MCF 10A (cell line): ENCODE measurements at regions of chr15 and their contacts with region 1.

Region 1: GRCh38 chr15:32651229-32651837 is 9.8 kb downstream of the SCG5 start:
- DNase-seq: peak; percentile 70
- H3K4me3 Mint-ChIP-seq: no peak overlapping the region
- H3K27ac Mint-ChIP-seq: no peak overlapping the region
- H3K4me1 Mint-ChIP-seq: peaks cover 12% of the 10 kb centered on the region
- H3K27me3 Mint-ChIP-seq: no peaks in the 10 kb centered on the region
- CTCF ChIP-seq: peak; percentile 88

Region 2: GRCh38 chr15:32956006-32956405 is 304.7 kb after region 1 on chr15:
- CTCF ChIA-PET with region 1: interaction called, 11 read pairs
- POLR2A ChIA-PET with region 1: no interaction called
- intact Hi-C with region 1: no loop called
- DNase-seq: peak; percentile 60
- H3K4me3 Mint-ChIP-seq: no peak overlapping the region
- H3K27ac Mint-ChIP-seq: no peak overlapping the region
- H3K4me1 Mint-ChIP-seq: peaks cover 8% of the 10 kb centered on the region
- H3K27me3 Mint-ChIP-seq: no peaks in the 10 kb centered on the region
- CTCF ChIP-seq: peak; percentile 38

Region 3: DNA sequence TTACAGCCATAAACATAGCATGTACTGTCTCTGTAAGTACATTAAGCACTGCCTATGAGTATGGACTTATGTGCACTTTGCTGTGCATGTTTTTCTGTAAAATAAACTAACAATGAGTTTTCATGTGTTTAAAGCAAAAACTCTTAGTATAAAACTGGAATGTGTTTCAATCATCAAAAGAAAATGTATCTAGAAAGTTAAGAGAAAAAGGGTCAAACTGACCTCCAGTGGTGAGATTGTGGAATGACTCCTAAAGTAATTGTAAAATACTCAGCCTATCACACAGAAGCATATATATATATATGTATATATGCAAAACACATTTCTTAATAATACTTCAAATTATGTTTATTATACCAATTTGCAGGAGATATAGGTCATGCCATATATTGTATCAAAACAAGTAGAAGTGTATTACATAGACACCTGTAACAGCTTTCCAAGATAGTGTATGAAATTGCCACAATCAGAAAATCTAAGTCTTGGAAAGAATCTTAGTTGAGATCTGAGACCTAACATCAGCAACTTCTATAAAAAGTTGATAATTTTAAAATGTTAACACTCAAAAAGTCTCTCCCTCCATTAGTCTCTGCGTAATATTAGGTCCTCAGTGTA is 343.6 kb after region 1 on chr15:
- CTCF ChIA-PET with region 1: interaction called, 51 read pairs
- POLR2A ChIA-PET with region 1: interaction called, 3 read pairs
- intact Hi-C with region 1: loop called (anchors 1 kb)
- DNase-seq: peak; percentile 52
- H3K4me3 Mint-ChIP-seq: no peak overlapping the region
- H3K27ac Mint-ChIP-seq: no peak overlapping the region
- H3K4me1 Mint-ChIP-seq: no peaks in the 10 kb centered on the region
- H3K27me3 Mint-ChIP-seq: no peaks in the 10 kb centered on the region
- CTCF ChIP-seq: peak; percentile 47